Activated CD4-positive, alpha-beta memory T cell treated with anti-CD3 and anti-CD28 coated beads, Interleukin-2, amount 10 ng/mL, durations not matched to agents 7 days and 5 days (primary cell): ENCODE measurements at regions of chr6 and their contacts with region 1.

Region 1: GRCh38 chr6:108835218-108835850 is 12.9 kb upstream of the ARMC2 start:
- DNase-seq: peak; percentile 88
- H3K4me3 Mint-ChIP-seq: no peak overlapping the region
- H3K27ac Mint-ChIP-seq: no peak overlapping the region
- H3K4me1 Mint-ChIP-seq: peaks cover 49% of the 10 kb centered on the region
- H3K27me3 Mint-ChIP-seq: peaks cover 12% of the 10 kb centered on the region

Region 2: DNA sequence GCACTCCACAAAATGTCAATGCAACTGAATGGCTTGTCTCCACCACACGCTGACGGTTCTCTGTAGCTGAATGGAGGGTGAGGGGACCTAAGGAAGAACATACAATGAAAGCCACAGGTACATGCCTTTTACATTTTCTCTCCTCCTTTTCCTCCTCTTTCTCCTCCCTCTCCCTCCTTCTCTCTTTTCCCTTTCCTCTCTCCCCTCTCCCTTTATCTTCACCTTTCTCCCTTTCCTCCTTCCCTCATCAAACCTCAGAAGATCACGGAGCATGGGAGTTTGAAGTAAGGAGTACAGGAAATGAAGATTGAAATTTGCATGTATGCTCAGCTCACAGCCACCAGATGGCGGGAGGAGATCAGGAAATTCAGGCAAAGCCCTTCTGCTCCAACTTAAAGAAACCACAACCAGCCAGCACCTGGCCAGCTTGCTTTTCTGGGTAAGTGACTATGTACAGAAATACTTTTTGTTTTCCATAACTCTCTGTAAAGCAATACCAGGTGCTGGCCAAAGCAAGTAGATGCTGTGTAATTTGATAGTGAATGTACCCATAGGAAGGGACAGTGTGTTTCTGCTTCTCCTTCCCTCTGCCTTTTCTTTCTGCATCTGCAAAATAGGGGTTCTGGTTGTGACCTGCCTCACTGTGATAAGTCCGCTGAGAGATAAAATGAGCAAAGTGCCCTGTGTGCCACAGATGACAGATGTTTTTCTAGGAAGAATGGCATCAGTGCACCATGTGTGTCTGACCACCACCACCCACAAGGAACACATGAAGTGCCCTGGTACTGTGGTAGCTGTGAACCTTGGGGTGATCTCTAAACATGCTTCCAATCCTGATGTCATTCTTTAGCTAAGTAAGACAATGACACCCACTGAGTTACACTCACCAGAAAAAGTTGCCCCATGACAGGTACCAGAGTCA is 293.2 kb before region 1 on chr6:
- CTCF ChIA-PET with region 1: interaction called, 19 read pairs
- POLR2A ChIA-PET with region 1: interaction called, 3 read pairs
- DNase-seq: peak; percentile 78
- H3K4me3 Mint-ChIP-seq: peak overlapping the region; percentile 40
- H3K27ac Mint-ChIP-seq: no peak overlapping the region
- H3K4me1 Mint-ChIP-seq: peaks cover 23% of the 10 kb centered on the region
- H3K27me3 Mint-ChIP-seq: peaks cover 18% of the 10 kb centered on the region

Region 3: DNA sequence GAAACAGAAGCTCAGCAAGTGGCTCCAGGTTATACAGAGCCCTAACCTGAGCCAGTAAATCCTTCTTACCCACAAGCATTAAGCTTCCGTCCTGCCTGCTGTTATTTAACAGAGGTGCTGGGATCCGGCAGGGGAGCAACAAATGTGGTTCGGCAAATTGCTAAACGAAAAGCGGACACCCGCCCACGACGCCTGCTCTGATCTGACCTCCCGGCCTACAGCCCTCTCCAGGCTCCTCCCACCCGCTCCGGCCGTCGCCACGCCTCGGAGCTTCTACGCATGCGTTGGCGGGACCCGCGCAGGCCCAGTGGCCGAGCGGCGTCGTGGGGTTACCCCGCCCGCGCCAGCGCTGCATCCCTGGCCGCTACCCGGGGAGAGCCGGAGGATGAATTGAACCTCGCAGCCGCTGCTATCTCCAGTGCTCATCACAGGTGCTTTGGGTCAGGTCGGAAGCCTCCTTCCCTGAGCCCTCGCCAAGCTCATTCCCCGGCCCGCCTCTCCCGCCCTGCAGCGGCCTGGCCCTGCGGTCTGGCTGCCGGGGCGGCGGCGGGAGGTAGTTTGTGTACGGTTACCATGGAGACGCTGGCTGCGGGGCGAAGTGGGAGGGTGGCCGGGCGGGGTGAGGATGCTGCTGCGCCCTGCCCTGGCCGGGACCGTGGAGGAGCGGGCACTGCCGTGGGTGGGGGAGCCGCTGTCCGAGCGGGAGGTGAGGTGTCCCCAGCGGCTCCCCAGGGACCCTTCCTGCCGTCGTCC is 13.0 kb after region 1 on chr6 and contains the start of gene ARMC2:
- CTCF ChIA-PET with region 1: interaction called, 15 read pairs
- POLR2A ChIA-PET with region 1: interaction called, 9 read pairs
- DNase-seq: peak; percentile 89
- H3K4me3 Mint-ChIP-seq: peak within 1 kb of the TSS; percentile 77
- H3K27ac Mint-ChIP-seq: peak within 1 kb of the TSS; percentile 70
- H3K4me1 Mint-ChIP-seq: peaks cover 34% of the 10 kb centered on the region
- H3K27me3 Mint-ChIP-seq: no peaks in the 10 kb centered on the region
- total RNA-seq, gene ARMC2: 12.2 to 13.6 TPM